ENCODE measurements at regions of chr13 and their contacts with region 1.

Region 1: DNA sequence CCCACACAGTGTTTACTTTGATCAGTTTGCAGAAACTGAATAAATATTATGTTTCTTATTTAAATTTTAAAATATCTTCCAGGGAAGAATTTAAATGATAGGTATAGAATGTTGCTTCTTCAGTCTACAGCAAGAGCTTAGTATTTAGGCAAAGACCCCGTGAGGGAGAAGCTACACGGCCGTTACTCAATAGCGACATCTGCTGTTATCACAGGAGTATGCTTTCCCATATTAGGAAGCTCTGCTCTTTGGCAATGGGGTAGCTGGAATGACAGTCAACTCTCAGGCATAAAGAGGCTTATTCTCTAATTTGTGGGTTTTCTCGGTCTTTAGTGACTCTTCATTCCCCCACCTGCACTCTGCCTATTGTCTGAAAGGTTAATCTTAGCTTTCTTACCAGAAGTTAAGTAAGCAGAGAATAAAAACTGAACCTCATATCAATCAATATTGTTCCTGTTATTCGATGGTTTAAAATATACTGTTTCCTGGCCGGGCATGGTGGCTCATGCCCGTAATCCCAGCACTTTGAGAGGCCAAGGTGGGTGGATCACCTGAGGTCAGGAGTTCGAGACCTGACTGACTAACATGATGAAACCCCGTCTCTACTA is 13.2 kb upstream of the LHFPL6 start:
- DNase-seq: peak; percentile 25
- ATAC-seq: peak; percentile 82 to 92

Region 2: DNA sequence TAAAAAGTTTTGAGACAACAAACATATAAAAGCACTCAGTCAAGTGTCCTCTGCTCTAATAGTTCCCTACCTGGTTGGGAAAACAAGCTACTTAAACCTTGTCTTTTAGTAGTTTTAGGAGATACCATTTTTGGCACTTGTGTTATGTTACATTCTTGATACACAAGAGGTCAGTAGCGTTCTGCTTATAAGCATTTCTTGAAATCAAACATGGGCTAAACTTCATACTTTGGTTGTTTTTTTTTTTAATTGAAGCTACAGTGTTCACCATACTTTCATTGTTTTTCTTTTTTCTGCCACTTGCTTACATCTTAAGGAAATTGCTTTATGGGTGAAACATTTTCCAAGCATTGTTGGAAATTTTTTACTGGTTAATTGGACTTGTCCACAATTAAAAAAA is 565.0 kb before region 1 on chr13:
- intact Hi-C with region 1: loop called in 1 of 2 experiments (anchors 2 kb)
- DNase-seq: no peak
- ATAC-seq: no peak

Region 3: GRCh38 chr13:39132286-39133230 is 483.6 kb before region 1 on chr13:
- intact Hi-C with region 1: loop called in 1 of 2 experiments (anchors 10 kb)
- DNase-seq: no peak
- ATAC-seq: no peak

Region 4: DNA sequence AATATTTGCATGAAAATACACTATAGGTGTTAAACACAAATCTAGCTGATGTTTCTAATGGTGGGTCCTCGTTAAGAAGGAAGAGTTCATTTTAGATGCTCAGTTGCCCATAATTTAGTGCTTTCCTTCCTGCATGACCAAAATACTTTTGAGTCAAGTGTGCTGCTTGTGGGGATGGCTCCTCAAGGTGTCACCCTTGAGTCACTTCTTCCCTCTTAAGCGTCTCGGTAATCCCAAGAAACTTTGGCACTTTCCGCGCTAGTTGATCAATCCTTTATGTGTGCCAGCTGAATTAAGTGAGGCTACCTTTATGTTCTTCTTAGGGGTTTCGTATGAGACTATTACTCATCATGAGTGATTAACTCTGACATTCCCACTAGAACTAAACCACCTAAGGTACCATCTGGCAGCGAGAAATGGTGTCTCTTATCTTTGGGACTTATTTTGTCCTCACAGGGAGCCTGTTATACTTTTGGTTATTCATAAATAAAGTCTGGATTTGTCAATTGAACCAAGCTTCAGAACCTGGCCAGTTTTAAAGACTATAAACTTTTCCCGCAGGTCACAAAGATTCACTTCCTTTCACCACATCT is 471.2 kb before region 1 on chr13:
- intact Hi-C with region 1: loop called in 1 of 2 experiments (anchors 5 kb)
- DNase-seq: peak; percentile 46
- ATAC-seq: peak; percentile 71 to 79

Region 5: DNA sequence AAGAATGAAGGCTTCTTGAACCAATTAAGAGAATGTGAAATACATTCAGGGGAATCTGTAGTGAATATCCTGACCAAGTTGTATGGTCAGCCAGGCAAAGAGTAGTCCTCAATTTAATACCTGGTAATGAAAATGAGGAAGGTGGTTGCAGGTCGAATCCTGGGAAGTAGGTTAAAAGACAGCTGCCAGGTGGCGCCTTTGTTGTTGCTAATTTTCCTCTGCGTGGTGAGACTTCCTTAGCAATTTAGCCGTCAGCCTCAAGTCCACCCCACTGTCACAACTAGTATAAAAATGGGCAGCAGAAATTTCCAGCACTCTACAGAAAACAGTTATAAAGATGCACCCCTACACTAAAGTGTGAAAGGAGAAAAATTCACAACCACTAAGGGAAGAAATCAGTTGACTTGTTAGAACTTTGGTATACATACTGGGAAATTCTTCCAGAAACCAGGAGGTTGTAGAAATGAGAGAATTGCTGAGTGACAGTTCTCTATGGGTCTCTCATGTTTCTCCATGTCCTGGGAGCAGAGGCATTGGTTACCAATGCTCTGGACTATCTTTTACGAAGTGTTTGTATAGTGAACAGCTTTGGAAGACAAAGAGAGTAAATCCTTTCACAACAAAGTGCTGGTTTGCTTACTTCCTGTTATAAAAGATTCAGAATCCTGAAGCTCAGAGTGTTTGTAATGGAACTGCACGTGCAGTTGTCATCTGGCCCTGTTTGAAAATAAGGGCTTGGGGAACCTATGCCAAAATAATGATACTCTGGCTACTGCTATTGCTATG is 342.0 kb before region 1 on chr13:
- intact Hi-C with region 1: loop called (anchors 5 kb)
- DNase-seq: no peak
- ATAC-seq: no peak